Esophagus muscularis mucosa (tissue), 4 donors: ENCODE measurements at regions of chr19 and their contacts with region 1.

Region 1: DNA sequence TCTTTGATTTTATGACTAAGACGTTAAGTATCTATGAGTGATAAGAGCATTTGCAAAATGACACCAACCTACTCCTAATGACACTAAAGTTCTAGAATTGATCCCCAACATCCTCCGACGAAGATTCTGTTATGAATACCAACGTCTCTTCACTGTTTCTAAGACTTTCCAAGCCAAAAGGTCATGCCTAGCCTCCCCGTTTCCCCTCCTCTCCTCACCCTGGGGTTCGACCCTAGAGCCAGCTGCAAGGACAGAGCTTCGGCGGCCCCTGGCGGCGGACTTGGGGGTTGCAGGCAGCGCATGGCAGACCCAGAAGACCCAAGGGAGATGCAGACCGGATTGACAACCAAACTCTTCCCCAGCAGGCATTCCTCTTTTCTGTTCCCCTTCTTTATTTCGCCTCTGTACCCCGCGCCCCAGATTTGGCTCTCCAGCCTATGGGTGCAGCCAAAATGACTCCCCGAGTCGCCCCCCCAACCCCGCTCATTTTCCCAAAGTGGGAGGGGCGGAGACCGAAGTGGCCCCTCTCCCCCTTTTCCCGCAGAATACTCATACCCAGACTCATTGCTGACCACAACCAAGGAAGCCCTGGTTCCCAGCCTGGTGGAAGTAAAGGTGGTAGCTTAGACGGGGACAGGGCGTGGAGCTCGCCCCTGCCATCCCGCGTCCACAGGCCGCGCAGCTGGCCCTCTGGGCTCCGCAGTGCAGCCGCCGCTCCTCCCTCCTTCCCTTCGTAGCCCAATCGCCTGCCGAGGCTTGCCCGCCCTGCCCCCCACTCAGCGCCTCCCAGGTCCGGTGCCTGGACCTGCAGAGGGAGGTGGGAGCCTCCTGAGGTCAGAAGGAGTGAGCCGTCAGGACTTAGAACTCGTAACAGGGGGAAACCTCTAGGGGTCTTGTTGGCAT is 4.1 kb upstream of the EML2 start:
- DNase-seq: peak; percentile 97
- H3K4me3 ChIP-seq: peak overlapping the region in 1 of 4 donors; percentile 11
- H3K27ac ChIP-seq: no peak overlapping the region
- H3K4me1 ChIP-seq: peaks cover 30 to 62% (median 60%) of the 10 kb centered on the region in 4 donors
- H3K27me3 ChIP-seq: peaks cover 0 to 41% (median 12%) of the 10 kb centered on the region in 4 donors
- CTCF ChIP-seq: peak; percentile 97 to 100 (median 99)
- EP300 ChIP-seq: no peak
- POLR2A ChIP-seq: no peak

Region 2: GRCh38 chr19:45523642-45524256 is 119.5 kb before region 1 on chr19:
- intact Hi-C with region 1: loop called (anchors 2 kb)
- DNase-seq: peak; percentile 94
- H3K4me3 ChIP-seq: no peak overlapping the region
- H3K27ac ChIP-seq: peak overlapping the region; percentile 47 to 76 (median 62)
- H3K4me1 ChIP-seq: peaks cover 21 to 75% (median 60%) of the 10 kb centered on the region in 4 donors
- H3K27me3 ChIP-seq: no peaks in the 10 kb centered on the region
- CTCF ChIP-seq: peak; percentile 89 to 97 (median 97)
- EP300 ChIP-seq: no peak
- POLR2A ChIP-seq: no peak

Region 3: GRCh38 chr19:45607071-45608029 is 35.9 kb before region 1 on chr19:
- intact Hi-C with region 1: loop called (anchors 1 kb)
- DNase-seq: no peak
- H3K4me3 ChIP-seq: peak overlapping the region; percentile 20 to 51 (median 36)
- H3K27ac ChIP-seq: peak overlapping the region in 3 of 4 donors; percentile 27 to 49 (median 27)
- H3K4me1 ChIP-seq: peaks cover 11 to 13% (median 12%) of the 10 kb centered on the region in 4 donors
- H3K27me3 ChIP-seq: peaks cover 0 to 18% (median 4%) of the 10 kb centered on the region in 4 donors
- CTCF ChIP-seq: peak; percentile 88 to 97 (median 94)
- EP300 ChIP-seq: no peak
- POLR2A ChIP-seq: no peak

Region 4: GRCh38 chr19:45681391-45682015 is 38.2 kb after region 1 on chr19:
- intact Hi-C with region 1: loop called (anchors 5 kb)
- DNase-seq: peak; percentile 96
- H3K4me3 ChIP-seq: peak overlapping the region; percentile 48 to 62 (median 51)
- H3K27ac ChIP-seq: peak overlapping the region; percentile 73 to 83 (median 76)
- H3K4me1 ChIP-seq: peaks cover 22 to 31% (median 30%) of the 10 kb centered on the region in 4 donors
- H3K27me3 ChIP-seq: peaks cover 12 to 39% (median 31%) of the 10 kb centered on the region in 4 donors
- CTCF ChIP-seq: peak in 2 of 3 experiments; percentile 97 to 98
- EP300 ChIP-seq: no peak
- POLR2A ChIP-seq: no peak

Region 5: DNA sequence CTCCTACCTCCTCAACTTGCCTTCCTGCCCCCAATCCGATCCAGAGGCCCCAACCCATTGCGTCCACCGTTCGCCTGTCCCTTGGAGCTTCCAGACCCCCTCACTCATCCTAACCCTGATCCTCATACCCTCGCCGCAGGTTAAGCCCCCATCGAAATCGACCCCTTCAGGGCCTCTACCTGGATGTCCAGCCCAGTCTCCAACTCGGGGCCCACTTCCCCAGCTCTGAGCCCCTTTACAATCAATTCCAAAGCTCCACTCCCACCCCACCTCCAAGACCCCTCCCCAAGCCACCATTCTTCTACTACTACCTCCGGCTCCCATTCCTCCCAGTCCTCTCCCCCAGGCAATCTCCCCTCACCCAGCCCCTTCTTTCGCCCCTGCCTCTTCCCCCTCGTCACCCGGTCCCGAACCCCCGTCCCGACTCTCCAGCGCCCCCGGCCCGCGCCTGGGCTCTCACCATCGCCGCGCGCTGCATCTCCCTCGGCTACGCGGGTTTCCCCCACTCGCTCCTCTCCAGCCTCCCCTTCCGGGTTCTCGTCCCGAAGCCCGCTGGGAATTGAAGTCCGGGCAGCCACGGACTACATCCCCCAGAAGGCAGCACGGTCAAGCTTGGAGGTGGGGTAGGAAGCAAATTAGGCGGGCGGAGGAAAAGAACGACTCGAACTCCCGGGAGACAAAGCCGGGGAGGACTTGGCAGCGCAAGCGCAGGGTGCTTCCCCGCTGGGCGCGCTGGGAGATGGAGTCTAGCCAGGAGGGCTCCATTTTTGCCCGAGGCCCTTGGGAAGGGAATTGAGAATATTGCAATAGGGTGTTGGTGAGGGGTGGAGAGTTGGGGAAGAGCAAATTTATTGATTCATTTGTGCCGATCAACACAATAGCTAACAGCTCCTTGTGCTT is 87.4 kb after region 1 on chr19 and contains the start of gene FBXO46:
- intact Hi-C with region 1: no loop called
- DNase-seq: peak; percentile 99
- H3K4me3 ChIP-seq: peak within 1 kb of the TSS; percentile 69 to 85 (median 79)
- H3K27ac ChIP-seq: peak within 1 kb of the TSS; percentile 73 to 85 (median 78)
- H3K4me1 ChIP-seq: peaks cover 11 to 34% (median 25%) of the 10 kb centered on the region in 4 donors
- H3K27me3 ChIP-seq: no peaks in the 10 kb centered on the region
- CTCF ChIP-seq: peak in 1 of 3 experiments; percentile 28
- EP300 ChIP-seq: no peak
- POLR2A ChIP-seq: peak; percentile 63
- total RNA-seq, gene FBXO46: 8.6 to 27.7 (median 18.2) TPM